H1 (cell line): ENCODE measurements at regions of chr2 and their contacts with region 1.

Region 1: GRCh38 chr2:191566344-191566743 is 111.6 kb upstream of the NABP1 start:
- DNase-seq: peak; percentile 23 to 90
- H3K4me3 ChIP-seq: no peak overlapping the region
- H3K27ac ChIP-seq: no peak overlapping the region
- H3K4me1 ChIP-seq: no peaks in the 10 kb centered on the region
- H3K27me3 ChIP-seq: no peaks in the 10 kb centered on the region
- CTCF ChIP-seq: peak; percentile 56 to 89 (median 83)
- EP300 ChIP-seq: no peak
- POLR2A ChIP-seq: no peak
- RAD21 ChIP-seq: peak; percentile 83 to 89

Region 2: GRCh38 chr2:191521608-191522208 is 44.6 kb before region 1 on chr2:
- CTCF ChIA-PET with region 1: no interaction called
- POLR2A ChIA-PET with region 1: no interaction called
- DNase-seq: no peak
- H3K4me3 ChIP-seq: no peak overlapping the region
- H3K27ac ChIP-seq: no peak overlapping the region
- H3K4me1 ChIP-seq: no peaks in the 10 kb centered on the region
- H3K27me3 ChIP-seq: no peaks in the 10 kb centered on the region
- CTCF ChIP-seq: peak in 1 of 3 experiments; percentile 43; a peak in 2 of 4 replicates
- EP300 ChIP-seq: no peak
- POLR2A ChIP-seq: no peak
- RAD21 ChIP-seq: peak in 1 of 2 experiments; percentile 68

Region 3: DNA sequence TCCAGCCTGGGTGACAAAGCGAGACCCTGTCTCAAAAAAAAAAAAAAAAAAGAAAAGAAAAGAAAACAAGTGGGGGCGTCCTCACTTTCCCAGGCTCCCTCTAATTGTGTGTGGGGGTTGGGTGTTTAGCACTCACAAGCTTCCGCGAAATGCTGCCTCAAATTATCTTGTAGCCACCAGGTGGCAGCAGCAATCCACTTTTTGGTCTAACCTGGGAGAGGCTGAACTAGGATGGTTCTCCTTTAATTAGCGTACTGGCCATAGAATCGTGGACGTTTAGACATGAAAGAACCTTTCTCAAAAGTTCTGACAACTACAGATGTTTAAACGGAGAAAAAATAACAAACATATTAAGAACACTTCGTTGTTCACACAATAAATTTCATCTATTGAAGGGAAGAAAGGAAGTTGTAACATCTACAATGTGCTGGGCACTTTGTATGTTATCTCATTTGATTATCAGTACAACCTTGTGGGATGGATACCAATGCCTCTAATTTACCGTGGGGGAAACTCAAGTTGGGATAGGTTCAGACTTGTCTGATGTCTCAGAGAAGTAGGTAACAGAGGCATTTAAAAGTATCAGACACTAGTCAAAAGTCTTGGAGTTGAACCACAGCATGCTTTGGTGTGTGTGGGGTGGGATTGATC is 11.1 kb before region 1 on chr2:
- CTCF ChIA-PET with region 1: interaction called, 66 read pairs
- POLR2A ChIA-PET with region 1: no interaction called
- DNase-seq: peak; percentile 44 to 91
- H3K4me3 ChIP-seq: no peak overlapping the region
- H3K27ac ChIP-seq: no peak overlapping the region
- H3K4me1 ChIP-seq: no peaks in the 10 kb centered on the region
- H3K27me3 ChIP-seq: no peaks in the 10 kb centered on the region
- CTCF ChIP-seq: peak; percentile 61 to 78 (median 78)
- EP300 ChIP-seq: no peak
- POLR2A ChIP-seq: no peak
- RAD21 ChIP-seq: peak; percentile 88 to 90

Region 4: GRCh38 chr2:191578036-191578435 is 11.7 kb after region 1 on chr2:
- CTCF ChIA-PET with region 1: interaction called, 10 read pairs
- POLR2A ChIA-PET with region 1: no interaction called
- DNase-seq: no peak
- H3K4me3 ChIP-seq: no peak overlapping the region
- H3K27ac ChIP-seq: no peak overlapping the region
- H3K4me1 ChIP-seq: no peaks in the 10 kb centered on the region
- H3K27me3 ChIP-seq: peaks cover 0 to 1% (median 0%) of the 10 kb centered on the region in 4 experiments; a peak in 1 of 7 replicates
- CTCF ChIP-seq: no peak
- EP300 ChIP-seq: no peak
- POLR2A ChIP-seq: no peak
- RAD21 ChIP-seq: no peak

Region 5: DNA sequence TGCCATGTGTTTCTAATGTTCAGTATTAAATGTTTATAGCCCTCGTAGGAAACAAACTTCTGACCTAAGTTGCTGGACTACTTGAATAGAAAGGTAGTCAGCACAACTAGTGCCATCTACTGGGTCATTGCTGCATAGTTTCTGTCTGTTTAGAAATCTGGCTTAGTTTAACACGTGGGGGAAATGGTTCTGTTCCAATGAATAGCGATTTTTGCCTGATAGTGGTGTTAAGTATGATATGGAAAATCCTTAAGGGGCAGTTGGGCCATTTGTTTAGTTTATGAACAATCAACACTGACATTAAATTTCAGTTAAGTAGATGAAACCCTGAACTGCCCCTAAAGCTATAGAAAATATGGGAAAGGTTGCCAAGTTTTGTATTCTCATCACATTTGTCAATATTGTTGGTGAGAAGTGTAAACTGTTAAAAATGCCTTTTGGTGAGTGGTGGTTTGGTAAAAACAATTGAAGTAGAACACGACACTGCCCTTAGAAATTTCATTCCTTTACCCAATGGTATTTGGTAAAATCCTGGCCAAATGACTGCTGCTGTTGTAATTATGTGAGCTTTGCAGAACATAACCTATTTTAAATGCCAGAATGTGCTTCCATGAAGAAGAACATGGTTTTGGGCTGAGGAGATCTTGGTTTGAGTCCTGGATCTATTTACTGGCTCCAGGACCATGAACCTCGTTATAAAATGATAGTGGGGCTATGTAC is 124.8 kb after region 1 on chr2:
- CTCF ChIA-PET with region 1: interaction called, 16 read pairs
- POLR2A ChIA-PET with region 1: no interaction called
- DNase-seq: no peak
- H3K4me3 ChIP-seq: no peak overlapping the region
- H3K27ac ChIP-seq: no peak overlapping the region
- H3K4me1 ChIP-seq: no peaks in the 10 kb centered on the region
- H3K27me3 ChIP-seq: no peaks in the 10 kb centered on the region
- CTCF ChIP-seq: peak in 2 of 3 experiments; percentile 68 to 81; a peak in 3 of 4 replicates
- EP300 ChIP-seq: no peak
- POLR2A ChIP-seq: no peak
- RAD21 ChIP-seq: peak; percentile 69 to 79

Region 6: GRCh38 chr2:191706791-191707190 is 140.4 kb after region 1 on chr2:
- CTCF ChIA-PET with region 1: interaction called, 11 read pairs
- POLR2A ChIA-PET with region 1: no interaction called
- DNase-seq: no peak
- H3K4me3 ChIP-seq: no peak overlapping the region
- H3K27ac ChIP-seq: no peak overlapping the region
- H3K4me1 ChIP-seq: no peaks in the 10 kb centered on the region
- H3K27me3 ChIP-seq: no peaks in the 10 kb centered on the region
- CTCF ChIP-seq: no peak
- EP300 ChIP-seq: no peak
- POLR2A ChIP-seq: no peak
- RAD21 ChIP-seq: no peak